ENCODE measurements at regions of chr11 and their contacts with region 1.

Region 1: DNA sequence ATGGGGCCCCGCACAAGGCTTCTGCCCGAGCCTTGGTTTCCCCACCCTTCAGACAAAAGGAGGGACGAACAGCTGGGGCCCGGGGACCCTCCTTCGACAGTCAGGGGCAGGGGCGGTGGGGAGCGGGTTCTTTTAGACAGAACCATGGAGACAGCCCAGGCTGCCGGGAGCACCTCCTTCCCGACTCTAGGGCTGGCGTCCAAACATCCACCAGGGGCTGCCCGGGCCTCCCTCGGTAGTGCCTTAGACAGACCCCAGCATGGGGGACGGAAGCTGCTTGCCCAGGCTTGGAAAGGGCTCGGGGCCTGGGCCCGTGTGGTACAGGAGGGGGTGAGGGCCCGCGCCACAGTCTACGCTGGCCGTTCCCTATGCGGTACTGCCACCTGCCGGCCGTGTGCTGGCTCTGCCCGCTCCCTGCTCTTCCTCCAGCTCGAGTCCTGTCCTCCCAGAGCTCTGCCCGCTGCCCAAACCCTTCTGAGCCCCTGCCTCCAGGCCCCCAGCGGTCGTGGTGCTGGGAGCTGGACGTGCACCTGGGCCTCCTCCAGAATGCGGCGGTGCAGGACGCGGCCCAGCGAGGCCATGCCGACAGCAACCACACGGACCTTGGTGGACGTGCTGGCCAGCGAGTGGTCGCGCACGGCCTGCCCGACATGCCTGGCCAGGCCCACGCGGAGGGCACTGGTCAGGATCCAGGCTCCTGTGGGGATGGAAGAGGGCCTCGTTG is 20.1 kb downstream of the TSSC4 start:
- H3K4me3 ChIP-seq: no peak overlapping the region
- H3K27ac ChIP-seq: no peak overlapping the region
- H3K4me1 ChIP-seq: no peaks in the 10 kb centered on the region
- CTCF ChIP-seq: peak; percentile 90

Region 2: DNA sequence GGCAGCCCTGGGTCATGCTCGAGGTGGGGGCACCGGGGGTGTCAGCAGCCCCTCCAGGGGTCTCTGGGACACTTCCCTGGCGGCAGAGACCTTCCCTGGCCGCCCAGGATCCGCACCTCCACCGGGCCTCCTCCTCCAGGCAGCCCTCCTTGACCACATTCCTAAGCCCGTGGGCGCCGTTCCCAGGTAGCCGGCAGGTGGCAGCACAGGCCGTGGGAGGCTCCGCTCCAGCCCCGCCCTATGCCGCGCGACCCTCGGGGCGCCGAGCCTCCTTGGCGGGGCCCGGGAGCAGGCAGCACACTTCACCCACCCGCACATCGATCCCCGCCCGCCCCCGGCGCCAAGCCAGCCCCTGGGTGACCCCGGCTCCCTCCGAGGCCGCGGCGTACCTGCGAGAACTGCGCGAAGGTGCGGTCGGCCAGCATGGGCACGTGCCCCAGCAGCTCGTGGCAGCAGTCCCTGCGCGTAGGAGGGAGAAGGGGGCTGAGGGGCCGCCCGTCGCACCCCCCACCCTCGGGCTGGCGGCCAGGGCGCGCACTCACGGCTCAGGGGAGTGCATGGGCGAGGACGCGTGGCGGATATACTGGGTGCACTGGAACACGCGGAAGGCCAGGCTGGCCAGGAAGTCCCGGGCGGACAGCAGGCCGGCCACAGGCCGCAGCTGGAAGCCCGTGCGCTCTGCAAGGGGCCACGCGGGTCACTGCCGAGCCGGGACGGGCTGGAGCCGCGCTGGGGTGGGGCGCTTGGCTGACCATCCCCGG is 254.4 kb before region 1 on chr11:
- CTCF ChIA-PET with region 1: interaction called, 21 read pairs
- POLR2A ChIA-PET with region 1: no interaction called
- H3K4me3 ChIP-seq: no peak overlapping the region
- H3K27ac ChIP-seq: no peak overlapping the region
- H3K4me1 ChIP-seq: no peaks in the 10 kb centered on the region
- CTCF ChIP-seq: peak; percentile 17; the same call in 1 of the 2 replicates

Region 3: GRCh38 chr11:2186669-2187279 is 233.9 kb before region 1 on chr11:
- CTCF ChIA-PET with region 1: interaction called, 15 read pairs
- POLR2A ChIA-PET with region 1: no interaction called
- H3K4me3 ChIP-seq: no peak overlapping the region
- H3K27ac ChIP-seq: no peak overlapping the region
- H3K4me1 ChIP-seq: no peaks in the 10 kb centered on the region
- CTCF ChIP-seq: no peak

Region 4: DNA sequence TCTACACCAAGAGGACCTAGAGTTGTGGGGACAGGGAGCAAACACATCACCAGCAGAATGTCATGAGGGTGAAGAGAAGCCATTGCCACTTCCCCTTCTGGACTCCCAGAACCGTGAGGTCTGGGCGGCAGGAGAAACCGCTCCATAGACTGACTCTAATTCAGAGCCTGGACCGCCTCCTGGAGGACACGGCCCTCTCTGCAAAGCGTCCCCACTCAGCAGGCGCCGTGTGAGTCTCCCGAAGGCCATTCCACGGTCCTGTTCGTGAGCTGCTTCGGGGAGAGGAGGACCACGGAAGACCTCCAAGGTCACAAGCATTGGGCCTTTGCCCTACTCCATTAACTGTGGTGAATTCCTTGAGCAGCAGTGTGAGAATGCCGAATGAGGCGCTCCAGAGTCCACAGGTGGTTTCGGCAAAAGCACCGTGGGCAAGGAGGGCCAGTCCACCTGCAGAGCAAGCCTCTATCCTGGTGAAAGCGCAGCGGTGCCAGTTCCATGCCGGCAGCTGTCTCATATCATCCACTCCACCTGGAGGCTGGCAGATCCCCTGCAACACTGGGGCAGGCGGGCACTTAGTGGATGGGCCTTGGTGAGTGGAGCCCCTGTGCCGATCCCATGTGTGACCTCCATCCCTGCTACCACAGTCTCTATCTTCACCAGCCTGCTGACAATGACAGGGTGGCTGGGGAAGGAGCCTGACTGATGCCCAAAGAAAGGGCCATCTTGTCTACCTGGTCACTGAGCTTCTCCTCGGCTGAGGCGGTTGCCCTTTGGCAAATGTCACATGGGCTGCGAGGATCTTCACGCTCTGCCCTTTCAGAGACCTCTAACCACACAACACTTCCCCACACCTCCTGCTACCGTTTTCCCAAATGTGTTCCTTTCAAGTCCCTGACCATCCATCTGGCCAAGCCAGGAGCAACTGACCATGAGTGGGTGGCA is 126.4 kb before region 1 on chr11:
- CTCF ChIA-PET with region 1: interaction called, 297 read pairs
- POLR2A ChIA-PET with region 1: no interaction called
- H3K4me3 ChIP-seq: no peak overlapping the region
- H3K27ac ChIP-seq: no peak overlapping the region
- H3K4me1 ChIP-seq: no peaks in the 10 kb centered on the region
- CTCF ChIP-seq: no peak

Region 5: GRCh38 chr11:2314525-2315394 is 105.9 kb before region 1 on chr11:
- CTCF ChIA-PET with region 1: interaction called, 47 read pairs
- POLR2A ChIA-PET with region 1: no interaction called
- H3K4me3 ChIP-seq: no peak overlapping the region
- H3K27ac ChIP-seq: no peak overlapping the region
- H3K4me1 ChIP-seq: peaks cover 2% of the 10 kb centered on the region; the same call in 1 of the 2 replicates
- CTCF ChIP-seq: no peak

Region 6: DNA sequence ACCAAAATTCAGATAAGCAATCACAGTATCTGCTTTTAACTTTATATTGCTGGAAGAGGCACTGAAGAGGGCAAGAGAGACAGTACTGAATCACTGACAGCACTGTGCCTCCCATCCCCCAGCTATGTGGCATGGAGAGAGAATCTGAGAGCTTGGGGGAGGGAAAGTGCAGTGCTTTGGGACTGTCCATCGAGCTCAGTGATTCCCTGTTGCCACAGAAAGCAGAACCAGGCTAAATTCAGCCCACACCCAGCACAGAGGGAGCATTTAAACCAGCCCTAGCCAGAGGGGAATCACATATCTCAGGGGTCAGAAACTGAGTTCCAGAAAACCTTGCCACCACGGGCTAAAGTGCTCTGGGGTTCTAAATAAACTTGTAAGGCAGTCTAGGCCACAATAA is 68.4 kb after region 1 on chr11:
- CTCF ChIA-PET with region 1: interaction called, 10 read pairs
- POLR2A ChIA-PET with region 1: no interaction called
- H3K4me3 ChIP-seq: no peak overlapping the region
- H3K27ac ChIP-seq: no peak overlapping the region
- H3K4me1 ChIP-seq: no peaks in the 10 kb centered on the region
- CTCF ChIP-seq: no peak

Region 7: DNA sequence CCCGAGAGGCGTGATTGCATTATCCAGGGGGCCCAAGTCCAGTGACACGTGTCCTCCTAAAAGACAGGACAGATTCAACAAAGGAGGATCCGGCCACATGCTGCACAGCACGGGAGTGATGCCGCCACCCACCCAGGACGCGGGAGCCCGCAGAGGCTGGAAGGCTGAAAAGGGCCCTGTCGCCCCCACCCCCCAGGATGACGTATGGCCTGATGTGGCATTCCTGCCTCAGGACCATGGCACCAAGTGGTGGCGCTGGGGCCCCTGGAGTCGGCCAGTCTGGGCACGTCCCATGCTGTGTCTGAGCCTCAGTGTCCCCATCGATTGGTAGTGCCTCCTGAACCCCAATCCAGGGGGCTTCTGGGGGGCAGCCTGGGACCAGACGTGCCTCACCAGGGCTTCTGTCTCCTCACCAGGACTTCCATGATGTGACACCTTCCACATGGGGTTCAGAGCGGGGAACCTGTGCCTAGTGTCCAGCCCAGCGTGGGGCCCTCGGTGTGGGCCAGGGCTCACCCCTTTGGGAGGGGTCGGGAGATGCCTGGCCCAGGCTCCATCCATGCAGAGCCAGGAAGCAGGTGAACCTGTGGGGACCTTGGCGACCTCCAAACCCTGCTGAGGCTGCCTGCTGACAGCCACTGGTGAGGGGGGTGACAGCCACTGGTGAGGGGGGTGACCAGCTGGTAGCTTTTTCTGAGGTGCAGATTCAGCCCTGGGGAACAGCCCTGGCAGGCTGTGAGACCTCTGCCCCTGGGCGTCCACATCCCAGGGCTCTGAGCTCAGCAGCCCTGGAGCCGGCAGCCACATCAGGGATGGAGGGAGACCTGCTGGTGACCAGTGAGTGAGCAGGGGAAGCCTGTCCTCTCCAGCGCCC is 99.4 kb after region 1 on chr11:
- CTCF ChIA-PET with region 1: no interaction called
- POLR2A ChIA-PET with region 1: no interaction called
- H3K4me3 ChIP-seq: no peak overlapping the region
- H3K27ac ChIP-seq: no peak overlapping the region
- H3K4me1 ChIP-seq: no peaks in the 10 kb centered on the region
- CTCF ChIP-seq: no peak

Region 8: DNA sequence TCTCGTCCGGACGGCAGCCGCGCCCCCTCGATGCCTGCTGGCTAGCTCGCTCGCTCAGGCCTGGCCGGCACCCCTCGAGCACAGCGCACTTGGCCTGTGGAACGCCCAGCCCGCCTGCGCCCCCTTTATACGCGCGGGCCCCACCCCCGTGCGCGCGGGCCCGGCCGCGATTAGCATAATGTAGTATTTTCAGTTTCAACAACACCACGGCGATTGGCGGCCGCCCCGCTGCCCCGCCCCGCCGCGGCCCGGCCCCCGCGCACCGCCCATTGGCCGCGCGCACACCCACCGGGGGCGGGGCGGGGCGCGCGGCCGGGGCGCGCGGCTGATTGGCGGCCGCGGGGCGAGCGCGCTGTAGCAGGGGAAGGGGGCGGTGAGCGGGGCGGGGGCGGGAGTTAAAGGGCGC is 465.0 kb after region 1 on chr11 and contains the start of gene CDKN1C:
- CTCF ChIA-PET with region 1: interaction called, 11 read pairs
- POLR2A ChIA-PET with region 1: no interaction called
- H3K4me3 ChIP-seq: peak within 1 kb of the TSS; percentile 47
- H3K27ac ChIP-seq: no peak within 1 kb of the TSS
- H3K4me1 ChIP-seq: no peaks in the 10 kb centered on the region
- CTCF ChIP-seq: no peak

Measured in HEK293 (cell line).